Activated CD8-positive, alpha-beta T cell treated with anti-CD3 and anti-CD28 coated beads, Interleukin-2, amount 10 ng/mL, durations not matched to agents 7 days and 5 days (primary cell): ENCODE measurements at regions of chr5 and their contacts with region 1.

Region 1: DNA sequence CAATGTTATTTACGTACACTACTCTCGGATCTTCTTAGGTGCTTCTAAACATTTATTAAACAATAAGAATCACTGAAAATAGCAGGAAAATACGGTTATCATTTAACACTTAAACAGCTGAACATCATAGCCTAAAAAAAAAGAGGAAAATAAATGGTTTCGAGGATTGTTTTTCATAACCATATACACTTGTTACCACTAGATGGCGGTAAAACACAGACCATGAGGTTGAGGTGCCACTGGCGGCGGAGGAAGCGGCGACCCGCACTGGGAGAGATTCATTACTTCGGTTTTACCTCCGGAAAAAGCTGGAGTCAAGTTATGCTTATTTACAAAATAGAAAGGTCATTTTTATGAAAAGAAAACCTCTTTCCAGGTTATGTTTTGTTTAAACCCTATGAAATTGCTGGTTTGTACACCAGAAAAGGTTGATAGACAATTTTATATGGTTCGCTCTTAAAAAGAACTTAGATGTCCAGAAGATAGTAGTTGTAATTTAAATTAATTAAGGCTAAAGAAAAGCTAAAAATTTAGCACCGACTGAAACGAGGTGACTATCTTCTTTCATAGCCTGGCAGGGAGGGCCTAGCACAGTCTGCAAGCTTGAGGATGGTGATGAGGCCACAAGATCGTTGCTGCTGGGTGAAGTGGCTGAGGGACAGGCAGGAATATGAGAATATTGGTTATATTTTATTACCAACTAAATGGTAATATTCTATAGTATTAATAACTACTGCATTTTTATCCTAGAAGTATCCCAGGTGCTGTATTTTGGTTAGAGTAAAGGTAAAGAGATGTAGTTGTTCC is 605.7 kb downstream of the RAB3C start:
- DNase-seq: peak; percentile 75
- ATAC-seq: peak; percentile 81
- H3K4me3 Mint-ChIP-seq: no peak overlapping the region
- H3K27ac Mint-ChIP-seq: no peak overlapping the region
- H3K4me1 Mint-ChIP-seq: peaks cover 5% of the 10 kb centered on the region
- H3K27me3 Mint-ChIP-seq: peaks cover 36% of the 10 kb centered on the region

Region 2: DNA sequence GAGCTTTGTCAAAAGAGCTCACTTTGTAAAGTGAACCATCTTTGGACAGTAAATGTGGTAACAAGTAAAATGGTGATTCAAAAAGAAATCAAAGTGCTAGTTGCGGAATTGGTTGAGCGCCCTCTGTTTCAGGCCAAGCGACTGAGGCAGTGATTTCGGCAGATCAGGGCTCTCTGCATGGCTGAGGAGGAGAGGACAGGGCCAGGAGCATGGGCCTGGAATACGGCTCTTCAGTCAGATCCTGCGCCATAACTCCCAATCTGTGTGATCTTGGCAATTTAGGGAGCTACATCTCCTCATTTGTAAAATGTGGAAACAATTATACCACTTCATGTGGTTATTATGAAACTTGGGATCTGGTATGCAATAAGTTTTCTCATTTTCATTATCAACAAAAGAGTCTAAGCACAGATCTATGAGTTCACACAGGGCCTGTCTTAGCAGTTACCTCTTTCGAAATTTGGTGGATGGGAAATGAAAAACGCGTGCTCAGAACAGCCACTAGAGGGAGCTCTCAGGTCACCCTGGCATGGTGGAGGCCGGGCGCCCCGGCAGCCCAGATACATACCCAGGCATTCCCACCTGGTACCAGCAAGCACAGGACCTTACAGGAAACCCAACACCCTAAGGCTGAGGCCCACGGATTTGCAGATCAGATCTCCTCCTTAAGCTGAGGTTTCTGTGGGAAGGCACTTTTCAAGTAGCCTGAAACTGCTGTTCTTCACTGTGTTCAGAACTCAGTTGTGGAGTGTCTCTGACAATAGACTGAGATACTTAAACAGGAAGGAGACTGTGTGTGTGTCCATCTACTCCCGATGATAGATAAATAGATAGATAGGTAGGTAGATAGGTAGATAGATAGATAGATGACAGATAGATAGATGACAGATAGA is 302.1 kb before region 1 on chr5:
- CTCF ChIA-PET with region 1: interaction called, 49 read pairs
- POLR2A ChIA-PET with region 1: interaction called, 4 read pairs
- DNase-seq: peak; percentile 73
- ATAC-seq: peak; percentile 90
- H3K4me3 Mint-ChIP-seq: no peak overlapping the region
- H3K27ac Mint-ChIP-seq: peak overlapping the region; percentile 27
- H3K4me1 Mint-ChIP-seq: peaks cover 24% of the 10 kb centered on the region
- H3K27me3 Mint-ChIP-seq: peaks cover 16% of the 10 kb centered on the region

Region 3: GRCh38 chr5:59039296-59040023 is 149.2 kb before region 1 on chr5:
- CTCF ChIA-PET with region 1: interaction called, 40 read pairs
- POLR2A ChIA-PET with region 1: no interaction called
- DNase-seq: peak; percentile 95
- ATAC-seq: peak; percentile 78
- H3K4me3 Mint-ChIP-seq: peak overlapping the region; percentile 83
- H3K27ac Mint-ChIP-seq: peak overlapping the region; percentile 99
- H3K4me1 Mint-ChIP-seq: peaks cover 50% of the 10 kb centered on the region
- H3K27me3 Mint-ChIP-seq: no peaks in the 10 kb centered on the region

Region 4: GRCh38 chr5:59246145-59246869 is 57.7 kb after region 1 on chr5:
- CTCF ChIA-PET with region 1: no interaction called
- POLR2A ChIA-PET with region 1: no interaction called
- DNase-seq: no peak
- ATAC-seq: no peak
- H3K4me3 Mint-ChIP-seq: no peak overlapping the region
- H3K27ac Mint-ChIP-seq: no peak overlapping the region
- H3K4me1 Mint-ChIP-seq: no peaks in the 10 kb centered on the region
- H3K27me3 Mint-ChIP-seq: peaks cover 6% of the 10 kb centered on the region

Region 5: DNA sequence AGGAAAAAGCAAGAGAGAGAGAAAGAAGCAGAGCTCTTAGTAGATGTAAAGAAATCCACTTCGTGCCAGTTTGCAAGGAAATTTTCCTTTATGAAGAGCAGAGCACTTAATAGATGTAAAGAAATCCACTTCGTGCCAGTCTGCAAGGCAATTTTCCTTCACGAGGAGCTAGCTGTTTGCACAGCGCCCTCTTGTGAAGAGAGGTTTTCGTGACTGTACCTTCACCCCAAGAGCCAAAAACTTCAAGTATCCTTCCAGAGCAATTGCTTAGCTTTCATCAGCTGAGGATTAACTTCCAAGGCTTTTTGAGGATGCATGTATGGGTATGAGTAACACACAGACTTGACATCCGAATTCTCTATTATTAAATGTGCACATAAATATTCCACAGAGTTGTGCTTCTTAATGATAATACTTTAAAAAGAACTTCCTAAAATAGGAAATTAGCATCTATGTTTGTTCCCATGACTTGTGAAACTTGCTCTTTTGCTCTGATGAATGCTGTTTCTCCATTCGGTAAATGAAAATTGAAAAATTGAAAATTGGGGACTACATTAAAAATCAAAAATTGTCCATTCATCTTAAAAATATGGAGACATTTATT is 179.3 kb after region 1 on chr5:
- CTCF ChIA-PET with region 1: interaction called, 39 read pairs
- POLR2A ChIA-PET with region 1: no interaction called
- DNase-seq: peak; percentile 62
- ATAC-seq: no peak
- H3K4me3 Mint-ChIP-seq: no peak overlapping the region
- H3K27ac Mint-ChIP-seq: no peak overlapping the region
- H3K4me1 Mint-ChIP-seq: no peaks in the 10 kb centered on the region
- H3K27me3 Mint-ChIP-seq: peaks cover 25% of the 10 kb centered on the region

Region 6: DNA sequence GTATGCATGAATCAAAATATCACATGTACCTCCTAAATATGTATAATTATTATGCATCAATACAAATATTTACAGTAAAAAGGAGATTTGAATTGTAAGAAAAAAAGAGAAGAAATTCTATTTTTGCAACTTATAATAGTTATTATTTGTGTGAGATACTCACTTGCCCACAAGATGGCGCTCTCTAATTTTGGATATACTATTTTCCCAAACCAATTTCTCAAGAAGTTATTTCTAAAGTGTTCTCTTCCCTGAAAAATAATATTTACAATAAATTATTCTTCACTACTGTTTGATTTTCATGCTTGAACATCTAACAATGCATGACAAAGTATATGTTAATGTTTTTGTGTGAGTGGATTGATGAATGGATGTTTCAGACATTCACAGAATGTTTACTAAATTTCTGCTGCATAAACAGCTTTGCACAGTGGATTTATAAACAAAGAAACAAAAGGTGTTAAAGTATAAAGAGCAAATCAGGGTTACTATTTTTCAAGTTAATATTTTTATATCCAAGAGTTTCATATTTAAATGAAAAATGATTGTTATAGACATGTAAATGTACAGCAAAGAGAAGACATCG is 201.5 kb after region 1 on chr5:
- CTCF ChIA-PET with region 1: interaction called, 12 read pairs
- POLR2A ChIA-PET with region 1: no interaction called
- DNase-seq: peak; percentile 39
- ATAC-seq: no peak
- H3K4me3 Mint-ChIP-seq: no peak overlapping the region
- H3K27ac Mint-ChIP-seq: no peak overlapping the region
- H3K4me1 Mint-ChIP-seq: no peaks in the 10 kb centered on the region
- H3K27me3 Mint-ChIP-seq: peaks cover 15% of the 10 kb centered on the region